ENCODE measurements at regions of chr2 and their contacts with region 1.

Region 1: DNA sequence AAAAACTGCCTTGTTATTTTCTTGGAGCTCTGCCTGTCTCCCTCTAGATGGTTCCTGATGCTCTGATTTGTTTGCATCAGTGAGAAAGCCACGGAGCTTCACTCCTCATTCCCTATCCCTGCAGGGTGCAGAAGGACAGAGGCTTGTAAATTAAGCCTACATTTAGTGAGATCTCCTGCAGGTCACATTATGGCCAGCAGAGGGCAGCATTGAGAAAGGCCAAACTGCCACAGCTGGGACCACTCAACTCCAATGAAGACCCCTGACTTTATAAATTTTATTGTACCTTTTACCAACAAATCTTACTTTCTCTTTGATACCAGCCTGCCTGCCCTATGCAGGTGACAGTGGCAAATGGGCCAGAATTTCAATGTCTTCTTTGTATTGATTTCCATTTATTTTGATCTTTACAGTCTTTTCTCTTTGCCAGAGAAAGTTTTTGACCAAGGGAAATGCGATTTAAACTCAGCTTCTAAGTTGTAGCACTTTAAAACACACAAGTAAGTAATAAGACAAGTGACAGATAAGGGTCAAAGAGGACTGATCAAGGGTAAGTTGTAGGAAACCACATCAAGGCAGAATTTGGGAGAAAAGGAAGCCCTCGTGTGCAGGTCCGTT is 1029.1 kb upstream of the KLHL29 start:
- DNase-seq: peak; percentile 19
- ATAC-seq: peak; percentile 56
- H3K4me3 Mint-ChIP-seq: no peak overlapping the region
- H3K27ac Mint-ChIP-seq: no peak overlapping the region
- H3K4me1 Mint-ChIP-seq: no peaks in the 10 kb centered on the region
- H3K27me3 Mint-ChIP-seq: no peaks in the 10 kb centered on the region
- CTCF ChIP-seq: peak; percentile 40

Region 2: DNA sequence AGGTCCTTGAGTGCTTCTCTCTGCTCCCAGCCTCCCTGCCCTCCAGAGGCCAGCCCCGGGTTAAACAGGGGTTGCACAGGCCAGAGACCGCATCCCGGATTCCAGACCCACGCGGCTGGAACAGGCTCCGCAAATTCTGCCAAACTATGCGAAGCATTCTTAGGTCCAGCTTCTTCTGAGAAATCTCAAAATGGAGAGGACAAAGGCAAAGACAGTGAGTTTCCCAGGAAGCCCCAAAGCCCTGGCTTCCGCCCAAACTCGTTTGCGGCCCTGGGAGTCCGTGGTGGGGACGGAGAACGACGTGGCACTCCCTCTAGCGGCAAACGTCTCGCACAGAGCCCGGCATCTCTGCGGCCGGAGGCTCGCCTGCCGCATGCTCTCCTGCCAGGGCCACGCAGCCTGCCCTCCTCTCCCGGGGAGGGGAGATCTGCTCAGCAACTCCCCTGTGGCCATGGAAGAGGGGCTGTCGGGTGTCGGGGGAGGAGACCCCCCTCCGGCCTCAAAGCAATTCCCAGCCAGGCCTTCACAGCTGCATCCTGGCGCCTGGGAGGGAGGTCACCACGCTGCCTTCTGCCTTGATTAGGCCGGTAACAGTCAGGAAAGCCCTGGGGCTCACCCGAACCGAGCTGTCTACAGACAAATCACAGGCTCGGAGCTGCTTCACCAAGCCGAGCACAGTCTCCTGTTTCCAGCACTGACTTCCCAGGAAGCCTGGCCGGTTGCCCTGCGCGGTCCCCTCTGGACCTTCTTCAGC is 995.6 kb after region 1 on chr2:
- CTCF ChIA-PET with region 1: no interaction called
- POLR2A ChIA-PET with region 1: no interaction called
- intact Hi-C with region 1: loop called (anchors 5 kb)
- DNase-seq: peak; percentile 40
- ATAC-seq: peak; percentile 75
- H3K4me3 Mint-ChIP-seq: no peak overlapping the region
- H3K27ac Mint-ChIP-seq: no peak overlapping the region
- H3K4me1 Mint-ChIP-seq: peaks cover 7% of the 10 kb centered on the region
- H3K27me3 Mint-ChIP-seq: peaks cover 26% of the 10 kb centered on the region
- CTCF ChIP-seq: peak; percentile 19

Region 3: GRCh38 chr2:23460228-23460627 is 1104.3 kb after region 1 on chr2:
- CTCF ChIA-PET with region 1: no interaction called
- POLR2A ChIA-PET with region 1: no interaction called
- intact Hi-C with region 1: loop called (anchors 5 kb)
- DNase-seq: no peak
- ATAC-seq: no peak
- H3K4me3 Mint-ChIP-seq: no peak overlapping the region
- H3K27ac Mint-ChIP-seq: no peak overlapping the region
- H3K4me1 Mint-ChIP-seq: no peaks in the 10 kb centered on the region
- H3K27me3 Mint-ChIP-seq: peaks cover 5% of the 10 kb centered on the region
- CTCF ChIP-seq: no peak